ENCODE measurements at regions of chr14 and their contacts with region 1.

Region 1: GRCh38 chr14:75307700-75308379 is 29.2 kb downstream of the FOS start:
- DNase-seq: peak; percentile 75 to 94
- H3K4me3 ChIP-seq: no peak overlapping the region
- H3K4me1 ChIP-seq: peaks cover 2% of the 10 kb centered on the region; the same call in 1 of the 2 replicates
- H3K27me3 ChIP-seq: no peaks in the 10 kb centered on the region

Region 2: DNA sequence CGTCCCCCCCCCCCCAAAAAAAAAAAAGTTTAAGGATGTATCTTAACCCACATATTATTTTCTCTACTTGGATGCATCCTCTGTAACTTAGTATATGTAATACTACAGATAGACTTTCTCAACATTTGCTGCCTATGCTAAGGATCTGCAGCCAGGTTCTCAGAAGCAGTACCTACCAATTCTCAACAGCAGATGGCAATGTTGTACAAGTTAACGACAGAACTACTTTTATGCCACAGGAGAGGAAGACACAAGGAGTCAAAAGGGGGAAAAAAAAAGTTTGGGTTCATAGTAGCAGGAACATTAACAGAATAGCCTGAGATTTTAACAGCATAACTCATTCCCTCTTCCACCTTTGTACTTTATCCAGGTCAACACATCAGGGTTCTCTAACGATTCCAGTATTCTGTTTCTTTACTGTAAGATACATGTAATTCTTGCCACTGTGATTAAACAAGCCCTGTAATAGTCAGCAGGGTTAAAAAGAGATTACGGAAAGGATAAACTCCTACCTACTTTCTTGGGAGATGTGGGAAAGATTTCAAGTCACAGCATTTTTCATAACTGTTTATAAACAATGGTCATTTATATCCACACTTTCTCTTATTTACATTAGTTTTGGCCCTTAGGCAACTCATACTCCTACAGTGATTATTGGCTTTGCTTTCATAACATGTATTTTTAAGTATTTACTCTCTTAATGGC is 175.3 kb before region 1 on chr14:
- in situ Hi-C with region 1: loop called (anchors 5 kb)
- DNase-seq: peak; percentile 70 to 74
- H3K4me3 ChIP-seq: no peak overlapping the region
- H3K4me1 ChIP-seq: peaks cover 15% of the 10 kb centered on the region
- H3K27me3 ChIP-seq: no peaks in the 10 kb centered on the region

Region 3: DNA sequence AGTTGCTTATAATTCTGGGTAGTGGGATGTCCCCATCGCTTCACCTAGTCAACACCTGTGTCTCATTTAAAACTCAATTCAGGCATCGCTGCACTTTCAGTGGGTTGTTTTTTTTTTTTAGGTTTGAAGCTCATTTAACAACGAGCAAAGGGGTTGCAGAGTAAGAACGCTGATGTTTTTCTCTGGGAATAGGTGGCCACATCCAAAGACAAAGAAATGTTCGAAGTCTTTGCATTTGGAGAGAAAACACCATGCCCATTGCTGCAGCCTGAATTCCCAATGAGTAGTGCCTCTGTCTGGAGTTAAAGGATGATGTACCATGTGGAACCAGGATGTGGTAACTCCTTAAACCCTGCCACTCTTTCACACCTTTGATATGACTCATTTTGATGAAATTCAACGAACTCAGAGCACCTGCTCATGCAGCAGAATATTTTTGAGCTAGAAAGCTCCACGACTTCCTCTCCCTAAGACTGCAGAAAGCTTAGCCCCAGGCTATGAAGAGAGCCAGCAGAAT is 179.4 kb after region 1 on chr14:
- in situ Hi-C with region 1: loop called (anchors 5 kb)
- DNase-seq: no peak
- H3K4me3 ChIP-seq: no peak overlapping the region
- H3K4me1 ChIP-seq: no peaks in the 10 kb centered on the region
- H3K27me3 ChIP-seq: no peaks in the 10 kb centered on the region; the same call in 1 of the 2 replicates